Colonic mucosa (tissue), 4 donors: ENCODE measurements at regions of chr17 and their contacts with region 1.

Region 1: GRCh38 chr17:385926-386876 is 33.6 kb upstream of the RPH3AL start:
- DNase-seq: peak; percentile 89
- H3K4me3 ChIP-seq: peak overlapping the region; percentile 53
- H3K27ac ChIP-seq: no peak overlapping the region
- H3K4me1 ChIP-seq: peaks cover 7% of the 10 kb centered on the region
- H3K27me3 ChIP-seq: no peaks in the 10 kb centered on the region
- CTCF ChIP-seq: peak; percentile 58

Region 2: GRCh38 chr17:143782-144281 is 242.4 kb before region 1 on chr17:
- intact Hi-C with region 1: loop called (anchors 2 kb)
- DNase-seq: peak; percentile 85
- H3K4me3 ChIP-seq: no peak overlapping the region
- H3K27ac ChIP-seq: no peak overlapping the region
- H3K4me1 ChIP-seq: no peaks in the 10 kb centered on the region
- H3K27me3 ChIP-seq: no peaks in the 10 kb centered on the region
- CTCF ChIP-seq: peak; percentile 98

Region 3: DNA sequence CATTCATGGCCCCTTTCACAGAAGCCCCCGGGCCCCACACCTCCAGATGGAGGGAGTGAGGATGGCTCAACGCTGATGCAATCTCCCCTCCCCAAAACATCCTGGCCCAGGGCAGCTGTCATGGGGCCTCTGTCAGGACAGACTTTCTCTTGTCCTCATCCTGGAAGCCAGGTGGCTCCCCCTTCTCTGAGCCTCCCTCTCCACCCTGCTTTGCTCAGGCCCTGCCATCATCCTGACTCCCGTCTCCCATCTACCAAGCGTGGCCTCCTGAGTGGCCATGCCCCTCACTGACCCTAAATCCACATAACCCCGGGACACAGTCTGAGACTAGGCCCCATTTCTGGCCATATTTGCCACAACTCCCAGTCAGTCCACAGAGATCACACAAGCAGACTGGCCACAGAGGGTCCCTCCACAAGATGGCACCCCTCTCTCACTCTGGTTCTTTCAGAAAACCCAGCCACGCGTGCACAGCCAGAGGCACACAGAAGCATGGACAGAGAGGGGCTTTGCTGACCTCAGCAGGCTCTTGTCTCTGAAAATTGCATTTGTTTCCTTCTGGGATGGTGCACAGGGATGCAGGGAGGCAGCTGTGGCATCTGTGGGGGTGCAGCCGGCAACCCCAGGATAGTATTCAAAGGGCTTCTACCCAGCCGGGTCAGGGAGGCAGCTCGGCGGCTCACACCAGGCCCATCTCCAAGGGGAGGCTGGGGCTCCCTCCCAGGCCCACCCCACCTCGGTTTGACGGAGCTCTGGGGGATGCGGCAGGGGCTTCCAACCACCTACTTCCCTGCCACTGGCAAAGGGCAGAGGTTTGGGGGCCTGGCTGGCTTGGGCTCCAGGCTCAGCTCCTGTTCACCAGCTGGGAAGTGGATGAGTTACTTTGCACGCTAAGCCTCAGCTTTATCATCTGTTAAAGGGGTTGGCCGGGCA is 221.6 kb before region 1 on chr17:
- intact Hi-C with region 1: loop called (anchors 5 kb)
- DNase-seq: peak; percentile 25
- H3K4me3 ChIP-seq: no peak overlapping the region
- H3K27ac ChIP-seq: no peak overlapping the region
- H3K4me1 ChIP-seq: no peaks in the 10 kb centered on the region
- H3K27me3 ChIP-seq: no peaks in the 10 kb centered on the region
- CTCF ChIP-seq: peak; percentile 30

Region 4: DNA sequence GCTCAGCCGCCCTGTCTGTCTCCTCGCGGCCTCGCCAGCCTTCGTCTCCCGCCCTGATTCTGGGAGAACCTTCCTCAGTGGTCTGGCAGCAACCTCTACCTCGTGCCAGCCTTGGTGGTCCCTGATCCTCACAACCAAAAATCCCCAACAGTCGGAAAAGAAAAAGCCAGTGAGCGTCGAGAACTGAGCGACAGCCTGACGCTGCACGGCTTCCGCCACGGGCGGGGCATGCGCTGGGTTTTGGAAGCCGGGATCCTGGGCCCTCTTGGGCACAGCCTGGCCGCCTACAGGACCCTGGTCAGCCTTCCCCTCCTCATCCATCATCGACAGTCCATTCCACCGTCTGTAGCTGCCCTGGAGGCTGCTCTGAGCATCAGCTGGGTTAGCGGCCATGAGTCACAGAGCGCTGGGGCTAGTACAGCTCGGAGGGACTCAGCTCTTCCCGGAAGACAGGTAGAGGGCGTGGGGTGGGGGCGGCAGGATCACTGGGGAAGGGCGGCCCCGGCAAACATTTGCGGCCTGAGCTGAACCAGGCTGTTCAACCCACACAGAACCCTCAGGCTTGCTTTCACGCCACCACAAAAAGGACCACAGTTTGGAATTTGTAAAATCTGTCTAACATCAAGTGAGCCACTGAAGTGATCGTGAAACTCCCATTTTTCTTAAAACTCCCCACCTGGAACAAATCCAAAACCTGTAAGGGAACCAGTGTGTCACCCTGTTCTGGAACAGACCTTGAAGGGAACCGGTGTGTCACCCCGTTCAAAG is 149.4 kb before region 1 on chr17:
- intact Hi-C with region 1: no loop called
- DNase-seq: peak; percentile 15
- H3K4me3 ChIP-seq: no peak overlapping the region
- H3K27ac ChIP-seq: no peak overlapping the region
- H3K4me1 ChIP-seq: peaks cover 3% of the 10 kb centered on the region
- H3K27me3 ChIP-seq: no peaks in the 10 kb centered on the region
- CTCF ChIP-seq: no peak

Region 5: GRCh38 chr17:266701-267667 is 119.2 kb before region 1 on chr17:
- intact Hi-C with region 1: no loop called
- DNase-seq: peak; percentile 14
- H3K4me3 ChIP-seq: no peak overlapping the region
- H3K27ac ChIP-seq: no peak overlapping the region
- H3K4me1 ChIP-seq: no peaks in the 10 kb centered on the region
- H3K27me3 ChIP-seq: no peaks in the 10 kb centered on the region
- CTCF ChIP-seq: no peak

Region 6: DNA sequence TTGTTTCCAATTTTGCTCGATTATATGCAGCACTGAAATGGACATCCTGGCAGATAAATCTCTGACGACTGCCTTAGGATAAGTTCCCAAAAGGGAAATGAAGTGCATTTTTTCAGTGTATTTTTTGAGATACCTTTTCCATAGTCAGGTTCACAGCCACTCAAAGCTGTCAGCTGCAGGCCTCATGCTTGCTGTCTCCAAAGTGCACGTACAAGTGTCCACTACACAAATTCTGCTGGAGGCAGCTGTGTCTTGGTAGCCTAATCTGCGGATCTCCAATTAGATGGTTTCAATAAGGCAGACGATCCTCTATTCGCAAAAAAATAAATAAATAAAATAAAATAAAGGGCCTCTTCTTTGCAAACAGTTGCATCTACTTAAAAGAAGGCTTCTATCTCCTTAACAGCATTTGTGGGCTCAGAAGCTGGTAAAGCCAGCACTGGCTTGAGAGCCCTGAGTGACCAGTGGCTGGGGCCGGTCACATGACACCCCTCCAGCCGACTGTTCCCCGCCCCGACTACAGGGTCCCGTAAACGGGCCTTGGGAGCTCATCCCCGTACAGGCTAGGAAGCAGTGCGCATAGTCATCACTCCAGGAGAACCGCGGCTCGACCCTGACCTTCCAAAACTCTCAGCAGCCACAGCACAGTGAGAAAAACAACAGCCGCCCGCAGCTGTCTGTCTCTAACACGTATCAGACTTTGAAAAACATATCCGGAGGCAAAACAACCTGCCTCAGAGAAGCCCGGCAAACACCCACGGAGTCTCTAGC is 52.4 kb before region 1 on chr17:
- intact Hi-C with region 1: no loop called
- DNase-seq: peak; percentile 47
- H3K4me3 ChIP-seq: no peak overlapping the region
- H3K27ac ChIP-seq: peak overlapping the region; percentile 20
- H3K4me1 ChIP-seq: peaks cover 5% of the 10 kb centered on the region
- H3K27me3 ChIP-seq: no peaks in the 10 kb centered on the region
- CTCF ChIP-seq: no peak